ENCODE measurements at regions of chr4 and their contacts with region 1.

Region 1: DNA sequence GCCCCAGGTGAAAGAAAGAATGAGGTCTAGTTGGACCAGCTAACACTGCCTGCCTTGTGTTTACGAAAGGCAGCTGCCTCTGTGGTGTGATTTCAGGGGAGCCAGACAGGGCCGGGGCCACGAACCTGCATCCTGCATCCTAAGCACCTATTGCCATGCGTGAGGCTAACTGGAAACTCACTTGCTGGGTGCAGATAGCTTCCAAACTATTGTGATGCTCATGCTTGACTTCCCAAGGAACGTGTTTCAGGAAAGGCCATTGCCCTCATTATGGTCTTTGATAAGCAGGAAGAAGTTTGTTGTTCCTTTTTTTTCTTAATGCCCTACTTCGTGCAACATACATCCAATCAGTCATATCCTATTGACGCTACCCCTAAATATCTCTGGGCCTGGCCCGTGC is 2.3 kb upstream of the IRF2 start:
- DNase-seq: peak in 25 of 35 experiments; percentile 4 to 43 (median 21)
- ATAC-seq: no peak
- H3K4me3 ChIP-seq: peak overlapping the region; percentile 13 to 23
- H3K4me3 Mint-ChIP-seq: peak overlapping the region; percentile 99 to 100 (median 100)
- H3K27ac ChIP-seq: peak overlapping the region; percentile 97
- H3K27ac Mint-ChIP-seq: peak overlapping the region; percentile 88 to 99
- H3K4me1 ChIP-seq: peaks cover 28 to 33% of the 10 kb centered on the region in 2 experiments
- H3K4me1 Mint-ChIP-seq: peaks cover 54 to 67% (median 58%) of the 10 kb centered on the region in 3 donors
- H3K27me3 ChIP-seq: no peaks in the 10 kb centered on the region
- H3K27me3 Mint-ChIP-seq: no peaks in the 10 kb centered on the region

Region 2: DNA sequence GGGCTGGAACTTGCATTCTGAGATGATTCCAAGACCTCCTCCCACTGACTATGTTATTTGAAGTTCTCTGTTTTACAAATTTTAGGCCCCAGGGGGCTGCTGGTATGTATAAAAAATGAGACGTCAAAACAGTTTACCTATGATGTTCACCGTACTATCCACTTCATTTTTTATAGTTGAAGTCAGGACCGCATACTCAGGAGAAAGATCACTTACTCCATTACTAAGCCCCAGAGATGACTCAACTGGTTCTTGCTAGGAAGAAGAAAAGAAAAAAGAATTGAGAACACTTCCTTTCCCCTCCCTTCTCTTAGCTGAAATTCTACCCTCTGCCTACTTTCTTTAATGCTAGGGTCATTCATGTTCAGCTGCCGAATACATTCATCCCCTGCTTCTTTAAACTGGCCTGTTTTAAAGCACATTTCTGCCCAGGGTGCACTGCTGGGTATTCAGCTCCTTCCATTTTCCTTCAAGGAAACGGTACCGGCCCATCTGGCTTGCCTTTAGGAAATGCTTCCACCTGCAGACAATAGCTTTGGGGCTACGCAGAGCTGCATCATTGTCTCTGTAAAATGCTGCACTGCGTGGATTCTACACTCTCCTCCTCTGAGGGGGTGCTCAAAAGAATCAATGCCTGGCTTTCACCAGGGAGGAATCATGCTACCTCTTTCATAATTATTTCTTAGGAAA is 68.5 kb before region 1 on chr4:
- CTCF ChIA-PET with region 1: no interaction called
- POLR2A ChIA-PET with region 1: no interaction called
- DNase-seq: no peak
- ATAC-seq: no peak
- H3K4me3 ChIP-seq: no peak overlapping the region
- H3K4me3 Mint-ChIP-seq: no peak overlapping the region
- H3K27ac ChIP-seq: peak overlapping the region; percentile 12
- H3K27ac Mint-ChIP-seq: peak overlapping the region; percentile 94 to 95
- H3K4me1 ChIP-seq: peaks cover 14 to 27% of the 10 kb centered on the region in 2 experiments
- H3K4me1 Mint-ChIP-seq: peaks cover 48 to 62% (median 57%) of the 10 kb centered on the region in 3 donors
- H3K27me3 ChIP-seq: no peaks in the 10 kb centered on the region
- H3K27me3 Mint-ChIP-seq: no peaks in the 10 kb centered on the region

Region 3: GRCh38 chr4:184498598-184498997 is 21.9 kb after region 1 on chr4:
- CTCF ChIA-PET with region 1: no interaction called
- POLR2A ChIA-PET with region 1: interaction called in 1 of 2 experiments, 11 read pairs
- DNase-seq: no peak
- ATAC-seq: no peak
- H3K4me3 ChIP-seq: no peak overlapping the region
- H3K4me3 Mint-ChIP-seq: no peak overlapping the region
- H3K27ac ChIP-seq: no peak overlapping the region
- H3K27ac Mint-ChIP-seq: no peak overlapping the region
- H3K4me1 ChIP-seq: peaks cover 2 to 5% of the 10 kb centered on the region in 2 experiments
- H3K4me1 Mint-ChIP-seq: peaks cover 3 to 11% (median 7%) of the 10 kb centered on the region in 3 donors
- H3K27me3 ChIP-seq: no peaks in the 10 kb centered on the region
- H3K27me3 Mint-ChIP-seq: no peaks in the 10 kb centered on the region